PC-9 (cell line): ENCODE measurements at regions of chr12 and their contacts with region 1.

Region 1: DNA sequence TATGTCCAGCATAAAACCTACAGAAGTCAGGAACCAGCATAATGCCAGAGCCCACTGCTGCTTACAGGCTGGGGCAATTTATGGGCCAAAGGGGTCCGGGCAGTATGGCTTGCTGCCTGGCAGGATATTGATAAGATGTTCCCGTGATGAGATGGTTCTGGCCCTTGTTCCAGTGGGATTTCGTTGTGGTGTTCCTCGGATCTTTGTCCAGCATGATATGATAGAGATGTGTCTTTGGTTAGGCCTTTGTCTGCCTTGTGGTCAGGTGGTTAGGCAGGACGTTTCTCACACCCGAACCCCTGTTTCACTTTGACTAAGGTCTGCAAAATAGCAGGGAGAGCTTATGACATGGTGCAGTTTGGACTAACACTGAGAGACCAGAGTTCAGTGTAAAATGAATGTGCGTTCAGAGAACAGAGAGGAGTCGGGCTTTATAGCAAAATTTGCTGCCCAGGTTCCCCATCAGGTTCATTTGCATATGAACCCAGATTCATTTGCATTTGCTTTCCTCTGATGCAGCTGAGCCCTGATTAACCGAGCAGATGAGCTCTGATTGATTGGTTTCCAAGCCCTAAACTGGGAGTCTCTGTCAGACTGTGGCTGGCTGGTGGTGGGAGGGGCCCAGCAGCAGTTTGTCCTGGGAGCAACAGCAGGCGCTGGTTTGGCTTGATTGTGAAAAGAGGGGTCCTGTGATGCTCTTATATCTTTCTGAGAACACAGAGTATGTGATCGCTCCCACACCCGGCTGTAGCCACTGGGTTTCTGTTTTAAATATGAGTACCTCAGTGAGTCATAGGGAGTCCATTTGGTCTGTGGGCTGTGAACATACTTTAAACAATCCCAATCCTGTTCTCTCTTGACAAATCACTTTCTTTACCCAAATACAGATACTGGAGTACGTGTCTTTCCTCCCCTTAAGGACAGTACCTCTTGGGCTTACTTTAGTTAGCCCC is 156.3 kb upstream of the PZP start:
- DNase-seq: no peak
- H3K4me3 ChIP-seq: no peak overlapping the region
- H3K27ac ChIP-seq: no peak overlapping the region
- H3K4me1 ChIP-seq: no peaks in the 10 kb centered on the region
- H3K27me3 ChIP-seq: peaks cover 24% of the 10 kb centered on the region; the same call in 1 of the 2 replicates
- CTCF ChIP-seq: no peak

Region 2: GRCh38 chr12:9237286-9237685 is 127.2 kb before region 1 on chr12:
- CTCF ChIA-PET with region 1: no interaction called
- POLR2A ChIA-PET with region 1: no interaction called
- intact Hi-C with region 1: no loop called
- DNase-seq: no peak
- H3K4me3 ChIP-seq: no peak overlapping the region
- H3K27ac ChIP-seq: no peak overlapping the region
- H3K4me1 ChIP-seq: no peaks in the 10 kb centered on the region
- H3K27me3 ChIP-seq: peaks cover 39% of the 10 kb centered on the region
- CTCF ChIP-seq: no peak

Region 3: GRCh38 chr12:10182354-10183061 is 818.0 kb after region 1 on chr12:
- CTCF ChIA-PET with region 1: interaction called, 11 read pairs
- POLR2A ChIA-PET with region 1: no interaction called
- intact Hi-C with region 1: no loop called
- DNase-seq: no peak
- H3K4me3 ChIP-seq: no peak overlapping the region
- H3K27ac ChIP-seq: 0 out of 2 replicates have a peak overlapping the region, but pooled peaks have one; percentile 2
- H3K4me1 ChIP-seq: peaks cover 49% of the 10 kb centered on the region
- H3K27me3 ChIP-seq: no peaks in the 10 kb centered on the region
- CTCF ChIP-seq: no peak